Caco-2 (cell line): ENCODE measurements at regions of chr5 and their contacts with region 1.

Region 1: GRCh38 chr5:87015901-87016300 is 251.8 kb upstream of the RASA1 start:
- DNase-seq: no peak
- H3K4me3 ChIP-seq: no peak overlapping the region
- H3K4me3 Mint-ChIP-seq: no peak overlapping the region
- H3K27ac Mint-ChIP-seq: no peak overlapping the region
- H3K4me1 ChIP-seq: no peaks in the 10 kb centered on the region
- H3K4me1 Mint-ChIP-seq: no peaks in the 10 kb centered on the region
- H3K27me3 ChIP-seq: no peaks in the 10 kb centered on the region; the same call in 1 of the 2 replicates
- H3K27me3 Mint-ChIP-seq: peaks cover 2% of the 10 kb centered on the region
- CTCF ChIP-seq: no peak

Region 2: DNA sequence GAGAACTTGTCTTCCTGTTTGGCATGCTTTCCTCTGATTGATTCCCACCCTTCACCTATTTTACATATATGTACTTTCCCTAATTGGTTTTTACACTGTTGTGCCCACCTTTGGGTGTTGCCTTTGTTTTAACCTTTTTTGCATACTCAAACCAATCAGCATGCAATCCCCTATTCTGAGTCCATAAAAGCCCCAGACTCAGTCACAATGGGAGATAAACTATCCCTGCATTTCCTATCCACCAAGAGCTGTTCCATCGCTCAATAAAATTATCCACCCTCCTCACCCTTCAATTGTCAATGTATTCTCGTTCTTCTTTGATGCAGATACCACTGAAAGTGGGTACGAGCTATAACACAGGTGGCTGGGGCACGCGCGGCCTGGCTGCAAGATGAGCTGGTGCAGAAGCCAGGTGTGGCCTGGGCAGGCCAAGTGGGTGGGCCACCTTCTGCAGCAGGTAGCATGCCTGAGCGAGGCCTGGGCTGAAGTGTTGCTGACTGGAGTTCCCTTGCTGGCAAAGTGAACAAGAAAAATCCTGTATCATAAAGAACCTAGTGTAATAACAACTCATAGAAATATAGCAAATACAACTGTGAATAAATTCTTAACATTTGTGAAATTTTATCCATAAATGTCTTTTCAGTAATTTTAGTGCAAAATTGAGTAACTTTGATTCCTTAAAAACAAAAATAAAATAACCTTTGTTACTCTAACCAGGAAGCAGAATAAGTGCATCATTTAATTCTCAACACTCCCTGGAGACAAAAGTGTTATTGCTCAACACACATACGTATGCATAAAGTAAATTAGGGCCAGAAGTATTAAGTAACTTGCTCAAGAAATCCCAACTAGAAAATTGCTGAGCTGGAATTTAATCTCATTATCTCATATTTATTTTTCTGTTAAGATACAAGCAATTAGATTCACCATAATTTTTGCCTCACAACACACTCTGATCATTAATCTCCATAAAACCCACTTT is 1946.0 kb before region 1 on chr5:
- CTCF ChIA-PET with region 1: no interaction called
- POLR2A ChIA-PET with region 1: no interaction called
- intact Hi-C with region 1: loop called (anchors 10 kb)
- DNase-seq: no peak
- H3K4me3 ChIP-seq: no peak overlapping the region
- H3K4me3 Mint-ChIP-seq: no peak overlapping the region
- H3K27ac Mint-ChIP-seq: no peak overlapping the region
- H3K4me1 ChIP-seq: no peaks in the 10 kb centered on the region
- H3K4me1 Mint-ChIP-seq: no peaks in the 10 kb centered on the region
- H3K27me3 ChIP-seq: no peaks in the 10 kb centered on the region
- H3K27me3 Mint-ChIP-seq: no peaks in the 10 kb centered on the region
- CTCF ChIP-seq: no peak

Region 3: GRCh38 chr5:86786955-86787354 is 228.9 kb before region 1 on chr5:
- CTCF ChIA-PET with region 1: no interaction called
- POLR2A ChIA-PET with region 1: no interaction called
- intact Hi-C with region 1: no loop called
- DNase-seq: no peak
- H3K4me3 ChIP-seq: no peak overlapping the region
- H3K4me3 Mint-ChIP-seq: no peak overlapping the region
- H3K27ac Mint-ChIP-seq: no peak overlapping the region
- H3K4me1 ChIP-seq: no peaks in the 10 kb centered on the region
- H3K4me1 Mint-ChIP-seq: no peaks in the 10 kb centered on the region
- H3K27me3 ChIP-seq: no peaks in the 10 kb centered on the region
- H3K27me3 Mint-ChIP-seq: peaks cover 7% of the 10 kb centered on the region
- CTCF ChIP-seq: no peak

Region 4: GRCh38 chr5:86929123-86929766 is 86.7 kb before region 1 on chr5:
- CTCF ChIA-PET with region 1: no interaction called
- POLR2A ChIA-PET with region 1: no interaction called
- intact Hi-C with region 1: no loop called
- DNase-seq: no peak
- H3K4me3 ChIP-seq: no peak overlapping the region
- H3K4me3 Mint-ChIP-seq: no peak overlapping the region
- H3K27ac Mint-ChIP-seq: no peak overlapping the region
- H3K4me1 ChIP-seq: no peaks in the 10 kb centered on the region
- H3K4me1 Mint-ChIP-seq: no peaks in the 10 kb centered on the region
- H3K27me3 ChIP-seq: no peaks in the 10 kb centered on the region
- H3K27me3 Mint-ChIP-seq: peaks cover 2% of the 10 kb centered on the region
- CTCF ChIP-seq: no peak

Region 5: DNA sequence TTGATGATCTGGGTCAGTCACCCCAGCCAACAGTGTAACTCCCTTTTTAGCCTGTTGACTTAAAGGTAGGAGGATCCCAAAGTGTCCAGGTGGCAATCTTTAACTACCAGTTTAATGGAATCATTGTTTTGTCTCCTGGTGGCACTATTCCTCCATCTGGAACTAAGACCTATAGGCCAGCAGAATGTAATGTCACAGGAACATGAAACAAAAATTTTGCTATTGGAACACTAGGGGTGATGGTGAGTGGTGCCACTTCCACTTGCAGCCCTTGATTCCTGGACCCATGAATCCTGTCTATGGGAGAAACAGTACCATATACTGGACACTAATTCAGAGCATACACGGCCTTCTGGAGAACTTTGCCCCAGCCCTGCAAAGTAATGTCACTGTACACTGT is 32.3 kb after region 1 on chr5:
- CTCF ChIA-PET with region 1: no interaction called
- POLR2A ChIA-PET with region 1: no interaction called
- intact Hi-C with region 1: no loop called
- DNase-seq: no peak
- H3K4me3 ChIP-seq: no peak overlapping the region
- H3K4me3 Mint-ChIP-seq: no peak overlapping the region
- H3K27ac Mint-ChIP-seq: no peak overlapping the region
- H3K4me1 ChIP-seq: no peaks in the 10 kb centered on the region
- H3K4me1 Mint-ChIP-seq: no peaks in the 10 kb centered on the region
- H3K27me3 ChIP-seq: no peaks in the 10 kb centered on the region
- H3K27me3 Mint-ChIP-seq: no peaks in the 10 kb centered on the region
- CTCF ChIP-seq: no peak

Region 6: DNA sequence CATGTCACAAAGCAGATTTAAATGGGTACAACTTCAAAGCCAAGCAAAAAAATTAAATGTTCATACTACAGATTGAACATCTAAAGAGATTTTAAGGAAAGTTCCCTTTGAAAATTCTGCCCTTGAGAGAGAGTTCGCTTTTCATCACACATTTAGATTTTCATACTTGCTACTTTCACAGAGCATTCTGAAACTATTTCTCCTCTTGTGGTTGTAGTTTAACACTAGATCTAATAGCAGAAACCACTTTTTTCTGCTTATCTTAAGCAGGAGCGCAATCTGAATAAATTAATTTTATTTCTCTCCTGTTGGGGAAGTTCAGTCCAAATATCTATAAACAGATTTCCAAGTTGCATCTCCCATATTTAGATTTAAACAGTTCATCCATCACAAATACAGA is 78.4 kb after region 1 on chr5:
- CTCF ChIA-PET with region 1: no interaction called
- POLR2A ChIA-PET with region 1: no interaction called
- intact Hi-C with region 1: no loop called
- DNase-seq: no peak
- H3K4me3 ChIP-seq: no peak overlapping the region
- H3K4me3 Mint-ChIP-seq: no peak overlapping the region
- H3K27ac Mint-ChIP-seq: no peak overlapping the region
- H3K4me1 ChIP-seq: no peaks in the 10 kb centered on the region
- H3K4me1 Mint-ChIP-seq: no peaks in the 10 kb centered on the region
- H3K27me3 ChIP-seq: no peaks in the 10 kb centered on the region
- H3K27me3 Mint-ChIP-seq: peaks cover 3% of the 10 kb centered on the region
- CTCF ChIP-seq: no peak